ENCODE measurements at regions of chr10 and their contacts with region 1.

Region 1: GRCh38 chr10:67779465-67780203 is 58.4 kb downstream of the DNAJC12 start:
- DNase-seq: peak; percentile 79
- H3K4me3 Mint-ChIP-seq: no peak overlapping the region
- H3K27ac Mint-ChIP-seq: no peak overlapping the region
- H3K4me1 Mint-ChIP-seq: no peaks in the 10 kb centered on the region
- H3K27me3 Mint-ChIP-seq: peaks cover 8% of the 10 kb centered on the region
- CTCF ChIP-seq: peak; percentile 75

Region 2: GRCh38 chr10:67549390-67549789 is 230.2 kb before region 1 on chr10:
- CTCF ChIA-PET with region 1: no interaction called
- intact Hi-C with region 1: loop called (anchors 10 kb)
- DNase-seq: no peak
- H3K4me3 Mint-ChIP-seq: no peak overlapping the region
- H3K27ac Mint-ChIP-seq: no peak overlapping the region
- H3K4me1 Mint-ChIP-seq: no peaks in the 10 kb centered on the region
- H3K27me3 Mint-ChIP-seq: no peaks in the 10 kb centered on the region
- CTCF ChIP-seq: no peak

Region 3: GRCh38 chr10:67666416-67667034 is 113.1 kb before region 1 on chr10:
- CTCF ChIA-PET with region 1: interaction called, 12 read pairs
- intact Hi-C with region 1: loop called (anchors 1 kb)
- DNase-seq: no peak
- H3K4me3 Mint-ChIP-seq: no peak overlapping the region
- H3K27ac Mint-ChIP-seq: no peak overlapping the region
- H3K4me1 Mint-ChIP-seq: no peaks in the 10 kb centered on the region
- H3K27me3 Mint-ChIP-seq: peaks cover 13% of the 10 kb centered on the region
- CTCF ChIP-seq: peak; percentile 66

Region 4: GRCh38 chr10:67697724-67698131 is 81.9 kb before region 1 on chr10:
- CTCF ChIA-PET with region 1: interaction called, 40 read pairs
- intact Hi-C with region 1: loop called (anchors 1 kb)
- DNase-seq: peak; percentile 44
- H3K4me3 Mint-ChIP-seq: no peak overlapping the region
- H3K27ac Mint-ChIP-seq: no peak overlapping the region
- H3K4me1 Mint-ChIP-seq: no peaks in the 10 kb centered on the region
- H3K27me3 Mint-ChIP-seq: peaks cover 63% of the 10 kb centered on the region
- CTCF ChIP-seq: peak; percentile 57